B cell (primary cell): ENCODE measurements at regions of chr9 and their contacts with region 1.

Region 1: DNA sequence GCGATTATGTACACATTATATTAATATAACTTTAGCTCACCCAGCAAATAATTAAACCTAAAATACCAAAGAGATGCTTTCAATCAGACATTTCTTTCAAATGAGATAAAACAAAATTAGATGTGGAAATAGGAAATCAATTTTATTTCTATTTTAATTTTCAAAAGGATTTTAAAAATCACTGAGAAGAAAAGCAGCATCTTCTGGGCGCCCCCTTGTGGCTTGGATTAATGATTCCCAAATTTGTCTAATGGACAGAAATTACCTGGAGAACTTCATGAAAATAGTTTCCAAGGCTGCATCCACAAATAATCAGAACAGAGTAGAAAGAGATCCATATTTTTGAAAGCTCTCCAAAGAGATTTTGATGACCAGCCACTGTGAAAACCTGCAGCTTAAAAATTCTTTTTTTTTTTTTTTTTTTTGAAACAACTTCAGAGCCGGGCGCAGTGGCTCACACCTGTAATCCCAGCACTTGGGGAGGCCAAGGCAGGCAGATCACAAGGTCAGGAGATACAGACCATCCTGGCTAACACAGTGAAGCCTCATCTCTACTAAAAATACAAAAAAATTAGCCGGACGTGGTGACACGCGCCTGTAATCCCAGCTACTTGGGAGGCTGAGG is 50.9 kb upstream of the CEMIP2 start:
- DNase-seq: peak; percentile 65
- ATAC-seq: no peak
- H3K4me3 ChIP-seq: no peak overlapping the region
- H3K4me3 Mint-ChIP-seq: no peak overlapping the region
- H3K27ac ChIP-seq: no peak overlapping the region
- H3K27ac Mint-ChIP-seq: no peak overlapping the region
- H3K4me1 ChIP-seq: peaks cover 21 to 24% of the 10 kb centered on the region in 2 donors
- H3K4me1 Mint-ChIP-seq: peaks cover 32% of the 10 kb centered on the region
- H3K27me3 ChIP-seq: no peaks in the 10 kb centered on the region
- H3K27me3 Mint-ChIP-seq: no peaks in the 10 kb centered on the region
- CTCF ChIP-seq: peak; percentile 88

Region 2: DNA sequence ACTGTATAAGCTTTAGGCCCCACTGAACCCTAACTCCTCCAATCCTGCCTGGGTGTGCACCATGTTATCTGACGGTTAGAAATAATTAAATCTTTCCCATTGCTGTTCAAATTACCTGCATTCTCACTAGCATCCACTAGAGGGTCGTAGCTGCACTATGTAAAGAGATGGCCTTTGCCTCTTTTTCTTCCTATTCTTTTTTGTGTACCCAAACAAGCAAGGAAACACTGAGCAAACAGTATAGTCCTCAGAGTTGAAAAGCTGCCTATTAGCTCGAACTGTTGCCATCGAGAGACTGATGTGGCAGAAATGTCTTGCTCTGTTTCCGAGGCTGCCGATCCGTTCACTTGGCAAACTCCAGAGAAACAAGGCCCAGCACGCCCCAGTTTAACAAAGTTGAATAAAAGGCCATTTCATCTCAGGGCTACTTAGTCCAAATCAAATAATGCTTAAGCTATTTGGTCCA is 534.0 kb before region 1 on chr9:
- CTCF ChIA-PET with region 1: interaction called, 25 read pairs
- POLR2A ChIA-PET with region 1: no interaction called
- intact Hi-C with region 1: no loop called
- DNase-seq: peak; percentile 54
- ATAC-seq: peak; percentile 61
- H3K4me3 ChIP-seq: no peak overlapping the region
- H3K4me3 Mint-ChIP-seq: no peak overlapping the region
- H3K27ac ChIP-seq: no peak overlapping the region
- H3K27ac Mint-ChIP-seq: no peak overlapping the region
- H3K4me1 ChIP-seq: no peaks in the 10 kb centered on the region
- H3K4me1 Mint-ChIP-seq: no peaks in the 10 kb centered on the region
- H3K27me3 ChIP-seq: no peaks in the 10 kb centered on the region
- H3K27me3 Mint-ChIP-seq: no peaks in the 10 kb centered on the region
- CTCF ChIP-seq: peak; percentile 93

Region 3: GRCh38 chr9:71697882-71698281 is 121.3 kb before region 1 on chr9:
- CTCF ChIA-PET with region 1: no interaction called
- POLR2A ChIA-PET with region 1: no interaction called
- intact Hi-C with region 1: no loop called
- DNase-seq: no peak
- ATAC-seq: no peak
- H3K4me3 ChIP-seq: no peak overlapping the region
- H3K4me3 Mint-ChIP-seq: no peak overlapping the region
- H3K27ac ChIP-seq: no peak overlapping the region
- H3K27ac Mint-ChIP-seq: no peak overlapping the region
- H3K4me1 ChIP-seq: no peaks in the 10 kb centered on the region
- H3K4me1 Mint-ChIP-seq: peaks cover 5% of the 10 kb centered on the region
- H3K27me3 ChIP-seq: no peaks in the 10 kb centered on the region
- H3K27me3 Mint-ChIP-seq: no peaks in the 10 kb centered on the region
- CTCF ChIP-seq: no peak

Region 4: DNA sequence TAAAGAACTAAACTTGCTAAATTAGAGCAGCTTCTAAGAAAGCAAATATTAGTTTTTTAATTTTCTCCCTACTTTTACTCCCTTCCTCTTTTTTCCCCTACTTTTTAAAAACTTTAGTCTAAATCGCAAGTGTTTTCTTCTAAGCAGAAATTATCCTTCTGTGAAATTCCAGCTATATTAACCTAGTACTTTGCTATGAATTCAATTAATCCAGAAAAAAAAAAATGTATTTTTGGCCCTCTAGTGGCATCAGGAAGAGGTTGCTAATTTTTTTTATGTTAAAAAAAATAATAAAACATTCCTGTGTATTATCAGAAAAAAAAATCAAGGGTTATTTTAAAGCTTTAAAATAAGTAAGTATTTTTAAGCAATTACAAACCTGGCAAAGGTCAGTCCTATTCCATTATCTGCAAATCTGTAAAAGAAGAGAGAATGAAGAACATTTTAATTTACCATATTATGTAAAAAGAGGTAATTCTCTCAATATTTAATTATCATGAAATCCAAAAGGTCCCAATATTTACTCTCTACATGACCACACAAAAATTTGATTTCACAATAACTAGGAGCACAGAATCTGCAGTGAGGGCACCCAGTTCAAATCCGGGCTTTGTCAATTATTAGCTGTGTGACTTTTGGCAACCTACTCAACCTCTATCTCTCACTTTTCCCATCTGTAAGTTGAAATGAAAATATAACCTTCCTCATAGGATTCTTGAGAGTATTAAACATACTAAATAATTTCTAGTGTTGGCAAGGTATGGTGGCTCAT is 102.9 kb before region 1 on chr9:
- CTCF ChIA-PET with region 1: interaction called, 25 read pairs
- POLR2A ChIA-PET with region 1: no interaction called
- intact Hi-C with region 1: no loop called
- DNase-seq: no peak
- ATAC-seq: no peak
- H3K4me3 ChIP-seq: no peak overlapping the region
- H3K4me3 Mint-ChIP-seq: no peak overlapping the region
- H3K27ac ChIP-seq: no peak overlapping the region
- H3K27ac Mint-ChIP-seq: no peak overlapping the region
- H3K4me1 ChIP-seq: no peaks in the 10 kb centered on the region
- H3K4me1 Mint-ChIP-seq: no peaks in the 10 kb centered on the region
- H3K27me3 ChIP-seq: no peaks in the 10 kb centered on the region
- H3K27me3 Mint-ChIP-seq: no peaks in the 10 kb centered on the region
- CTCF ChIP-seq: peak; percentile 82

Region 5: GRCh38 chr9:71783120-71783530 is 36.1 kb before region 1 on chr9:
- CTCF ChIA-PET with region 1: interaction called, 143 read pairs
- POLR2A ChIA-PET with region 1: no interaction called
- intact Hi-C with region 1: loop called (anchors 1 kb)
- DNase-seq: peak; percentile 90
- ATAC-seq: peak; percentile 93
- H3K4me3 ChIP-seq: peak overlapping the region in 3 of 5 experiments; percentile 6 to 22 (median 19)
- H3K4me3 Mint-ChIP-seq: peak overlapping the region; percentile 74
- H3K27ac ChIP-seq: peak overlapping the region; percentile 77 to 85
- H3K27ac Mint-ChIP-seq: peak overlapping the region; percentile 93
- H3K4me1 ChIP-seq: peaks cover 30 to 32% of the 10 kb centered on the region in 2 donors
- H3K4me1 Mint-ChIP-seq: peaks cover 44% of the 10 kb centered on the region
- H3K27me3 ChIP-seq: no peaks in the 10 kb centered on the region
- H3K27me3 Mint-ChIP-seq: no peaks in the 10 kb centered on the region
- CTCF ChIP-seq: peak; percentile 48

Region 6: GRCh38 chr9:71806901-71807307 is 12.3 kb before region 1 on chr9:
- CTCF ChIA-PET with region 1: interaction called, 116 read pairs
- POLR2A ChIA-PET with region 1: no interaction called
- intact Hi-C with region 1: no loop called
- DNase-seq: peak; percentile 74
- ATAC-seq: peak; percentile 88
- H3K4me3 ChIP-seq: no peak overlapping the region
- H3K4me3 Mint-ChIP-seq: no peak overlapping the region
- H3K27ac ChIP-seq: no peak overlapping the region
- H3K27ac Mint-ChIP-seq: peak overlapping the region; percentile 2
- H3K4me1 ChIP-seq: peaks cover 14 to 16% of the 10 kb centered on the region in 2 donors
- H3K4me1 Mint-ChIP-seq: peaks cover 24% of the 10 kb centered on the region
- H3K27me3 ChIP-seq: no peaks in the 10 kb centered on the region
- H3K27me3 Mint-ChIP-seq: no peaks in the 10 kb centered on the region
- CTCF ChIP-seq: peak; percentile 89

Region 7: DNA sequence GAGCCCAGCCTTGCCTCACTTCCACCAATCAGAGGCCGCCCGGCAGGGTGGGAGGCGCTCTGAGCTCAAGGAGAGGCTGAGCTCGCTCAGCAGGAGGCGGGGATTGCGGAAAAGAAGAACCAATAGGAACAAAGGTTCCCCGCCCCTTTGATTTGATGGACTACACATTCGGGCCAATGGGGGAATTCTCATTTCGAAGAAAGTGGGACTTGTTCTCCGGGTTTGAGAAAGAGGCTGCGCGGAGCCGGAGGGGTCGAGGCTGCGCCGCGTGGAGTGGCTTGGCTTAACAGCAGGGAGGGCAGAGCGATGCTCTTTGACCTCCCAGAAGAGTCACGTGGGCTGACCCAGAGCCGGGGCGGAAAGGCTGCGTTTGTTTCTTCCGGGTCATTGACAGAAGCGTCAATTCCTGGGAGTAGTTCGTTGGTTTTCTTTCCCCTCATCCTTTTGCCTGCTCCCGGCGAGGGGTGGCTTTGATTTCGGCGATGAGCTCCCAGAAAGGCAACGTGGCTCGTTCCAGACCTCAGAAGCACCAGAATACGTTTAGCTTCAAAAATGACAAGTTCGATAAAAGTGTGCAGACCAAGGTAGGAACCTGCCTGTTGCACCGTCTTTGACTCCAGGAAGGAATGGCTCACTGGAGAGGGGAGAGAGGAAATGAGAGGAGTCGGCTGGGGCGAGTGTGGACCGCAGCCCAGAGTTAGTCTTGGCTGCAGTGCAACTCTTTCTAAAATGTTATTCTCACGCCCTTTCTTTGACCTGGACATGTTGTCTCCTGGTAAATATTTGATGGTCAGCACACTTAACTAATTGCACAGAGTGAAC is 92.2 kb after region 1 on chr9 and contains the start of gene C9orf85:
- CTCF ChIA-PET with region 1: interaction called, 11 read pairs
- POLR2A ChIA-PET with region 1: no interaction called
- intact Hi-C with region 1: loop called (anchors 5 kb)
- DNase-seq: peak; percentile 98
- ATAC-seq: peak; percentile 93
- H3K4me3 ChIP-seq: peak within 1 kb of the TSS; percentile 72 to 99 (median 85)
- H3K4me3 Mint-ChIP-seq: peak within 1 kb of the TSS; percentile 100
- H3K27ac ChIP-seq: peak within 1 kb of the TSS; percentile 74 to 80
- H3K27ac Mint-ChIP-seq: peak within 1 kb of the TSS; percentile 100
- H3K4me1 ChIP-seq: peaks cover 22 to 24% of the 10 kb centered on the region in 2 donors
- H3K4me1 Mint-ChIP-seq: peaks cover 66% of the 10 kb centered on the region
- H3K27me3 ChIP-seq: no peaks in the 10 kb centered on the region
- H3K27me3 Mint-ChIP-seq: no peaks in the 10 kb centered on the region
- CTCF ChIP-seq: no peak
- total RNA-seq, gene C9orf85: 9.4 and 9.6 TPM in 2 replicates